ENCODE measurements at regions of chr5 and their contacts with region 1.

Region 1: GRCh38 chr5:154857530-154858296 is 714 bp upstream of the CNOT8 start:
- DNase-seq: peak; percentile 88
- ATAC-seq: peak; percentile 86
- H3K4me3 ChIP-seq: peak overlapping the region; percentile 93
- H3K27ac ChIP-seq: peak overlapping the region; percentile 88
- H3K4me1 ChIP-seq: peaks cover 11% of the 10 kb centered on the region; the same call in 1 of the 2 replicates
- H3K27me3 ChIP-seq: no peaks in the 10 kb centered on the region
- CTCF ChIP-seq: no peak

Region 2: DNA sequence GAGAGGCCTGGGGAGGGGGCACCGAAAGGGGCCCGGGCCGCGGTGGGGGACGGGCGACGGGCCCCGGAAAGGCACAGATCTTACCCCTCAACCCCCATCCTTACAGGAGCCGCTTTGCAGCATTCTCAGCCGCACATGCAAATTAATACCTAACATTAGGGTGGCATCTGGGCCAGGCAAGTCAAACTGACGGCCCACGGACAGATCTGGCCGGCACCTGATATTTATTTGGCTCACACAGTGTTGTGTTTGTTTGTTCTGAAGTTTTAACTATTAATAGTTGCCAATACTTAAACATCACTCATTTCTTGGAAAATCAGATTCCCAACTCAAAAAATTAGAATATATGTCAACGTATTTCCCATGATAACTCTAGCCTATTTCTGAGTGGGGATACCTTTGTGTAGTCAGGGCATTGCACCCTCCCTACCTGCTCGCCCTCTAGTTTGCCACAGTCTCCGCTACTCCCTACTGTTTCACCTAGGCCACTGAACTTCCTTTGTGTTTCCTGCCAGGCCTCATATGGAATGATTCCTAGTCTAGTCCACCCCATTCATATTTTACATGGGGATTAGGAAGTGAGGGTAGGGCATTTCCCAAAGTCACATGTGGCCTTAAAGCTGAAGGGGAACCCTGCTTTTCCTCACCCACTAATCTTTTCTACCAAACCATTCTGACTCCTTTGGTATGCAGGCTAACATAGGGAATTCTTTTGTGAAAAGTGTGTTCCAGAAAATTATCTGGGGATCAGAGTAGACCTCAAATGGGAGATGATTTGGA is 174.4 kb before region 1 on chr5:
- CTCF ChIA-PET with region 1: no interaction called
- POLR2A ChIA-PET with region 1: interaction called, 15 read pairs
- intact Hi-C with region 1: no loop called
- DNase-seq: no peak
- ATAC-seq: peak; percentile 10
- H3K4me3 ChIP-seq: peak overlapping the region; percentile 66; the same call in 1 of the 2 replicates
- H3K27ac ChIP-seq: no peak overlapping the region
- H3K4me1 ChIP-seq: peaks cover 3% of the 10 kb centered on the region; the same call in 1 of the 2 replicates
- H3K27me3 ChIP-seq: no peaks in the 10 kb centered on the region
- CTCF ChIP-seq: no peak

Region 3: GRCh38 chr5:154811653-154812365 is 45.9 kb before region 1 on chr5:
- CTCF ChIA-PET with region 1: no interaction called
- POLR2A ChIA-PET with region 1: no interaction called
- intact Hi-C with region 1: loop called (anchors 5 kb)
- DNase-seq: peak; percentile 52
- ATAC-seq: peak; percentile 72
- H3K4me3 ChIP-seq: no peak overlapping the region
- H3K27ac ChIP-seq: no peak overlapping the region
- H3K4me1 ChIP-seq: no peaks in the 10 kb centered on the region
- H3K27me3 ChIP-seq: no peaks in the 10 kb centered on the region
- CTCF ChIP-seq: peak; percentile 87

Region 4: DNA sequence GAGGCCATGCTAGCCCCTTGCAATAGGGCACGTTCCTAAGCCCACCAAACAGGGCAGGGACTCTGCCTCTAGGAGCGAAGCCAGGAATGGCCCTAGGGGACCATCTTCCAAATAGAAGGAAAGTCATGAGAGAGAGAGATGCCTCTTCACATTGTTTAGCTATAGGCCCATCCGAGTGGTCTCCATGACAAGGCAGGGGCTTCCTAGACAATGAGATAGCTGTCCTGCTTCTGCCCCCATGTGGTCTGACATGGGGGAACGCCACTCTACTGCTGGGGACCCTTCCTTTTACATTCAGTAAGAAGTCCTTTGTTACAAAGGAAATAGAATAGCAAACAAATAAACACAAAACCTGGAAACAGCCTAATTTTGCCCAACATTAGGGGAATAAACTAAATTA is 138.0 kb after region 1 on chr5:
- CTCF ChIA-PET with region 1: no interaction called
- POLR2A ChIA-PET with region 1: no interaction called
- intact Hi-C with region 1: no loop called
- DNase-seq: no peak
- ATAC-seq: no peak
- H3K4me3 ChIP-seq: no peak overlapping the region
- H3K27ac ChIP-seq: no peak overlapping the region
- H3K4me1 ChIP-seq: peaks cover 9% of the 10 kb centered on the region
- H3K27me3 ChIP-seq: no peaks in the 10 kb centered on the region
- CTCF ChIP-seq: 0 out of 2 replicates have a peak, but pooled peaks have one; percentile 29